Esophagus squamous epithelium (tissue), 5 donors: ENCODE measurements at regions of chr20 and their contacts with region 1.

Region 1: DNA sequence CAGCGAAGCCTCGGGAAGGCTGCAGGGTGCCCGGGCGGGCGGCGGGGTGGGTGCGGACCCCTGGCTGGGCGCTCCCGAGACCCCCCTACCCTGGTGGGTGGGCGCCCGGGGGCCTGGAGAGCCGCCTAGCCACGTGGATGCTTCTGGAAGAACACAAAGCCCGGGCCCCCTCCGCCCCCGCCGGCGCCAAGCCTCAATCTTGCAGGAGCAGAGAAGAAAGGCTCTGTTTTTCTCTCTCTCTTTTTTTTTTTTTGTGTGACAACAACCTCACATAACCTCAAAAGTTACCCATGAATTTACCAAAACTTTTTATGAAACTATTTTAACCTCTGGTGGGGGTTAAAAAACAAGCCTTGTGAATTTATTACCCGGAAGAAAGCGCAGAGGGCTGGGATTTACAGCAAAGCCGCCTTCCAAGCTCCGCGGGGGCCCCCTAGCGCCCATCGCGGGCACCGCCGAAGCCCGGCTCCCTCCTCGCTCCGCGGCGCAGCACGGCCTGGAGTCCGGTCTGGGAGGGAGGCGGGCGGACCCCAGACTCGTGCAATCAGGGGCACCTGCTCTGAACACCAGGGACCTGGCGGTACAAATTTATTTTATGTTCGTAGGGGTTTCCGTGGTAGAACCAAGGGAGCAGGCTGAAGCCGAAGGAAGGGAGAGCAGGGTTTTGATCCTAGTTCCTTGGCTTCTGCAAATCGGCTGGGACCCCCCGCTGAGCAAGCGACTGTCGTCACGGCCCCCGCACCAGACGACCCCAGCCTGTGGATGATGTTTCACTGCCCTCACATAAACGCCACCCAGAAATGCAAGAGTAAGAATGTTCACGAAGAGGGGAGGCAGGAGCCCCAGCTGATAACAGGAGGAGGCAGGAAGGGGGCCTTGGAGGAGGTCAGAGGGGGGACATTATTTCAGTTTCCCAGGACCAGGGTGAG is 58.9 kb downstream of the ZNF831 start:
- DNase-seq: no peak
- H3K4me3 ChIP-seq: peak overlapping the region; percentile 46 to 70 (median 54)
- H3K27ac ChIP-seq: peak overlapping the region; percentile 64 to 81 (median 72)
- H3K4me1 ChIP-seq: peaks cover 5 to 27% (median 12%) of the 10 kb centered on the region in 3 donors
- H3K27me3 ChIP-seq: peaks cover 0 to 29% (median 0%) of the 10 kb centered on the region in 4 donors
- CTCF ChIP-seq: peak; percentile 88 to 94 (median 92)
- POLR2A ChIP-seq: no peak

Region 2: GRCh38 chr20:58870239-58871014 is 352.1 kb before region 1 on chr20:
- intact Hi-C with region 1: loop called (anchors 10 kb)
- DNase-seq: no peak
- H3K4me3 ChIP-seq: no peak overlapping the region
- H3K27ac ChIP-seq: no peak overlapping the region
- H3K4me1 ChIP-seq: peaks cover 0 to 7% (median 0%) of the 10 kb centered on the region in 3 donors
- H3K27me3 ChIP-seq: no peaks in the 10 kb centered on the region
- CTCF ChIP-seq: peak; percentile 81 to 85 (median 84)
- POLR2A ChIP-seq: no peak

Region 3: GRCh38 chr20:59006864-59007664 is 215.5 kb before region 1 on chr20 and contains the start of gene CTSZ:
- intact Hi-C with region 1: no loop called
- DNase-seq: no peak
- H3K4me3 ChIP-seq: peak within 1 kb of the TSS; percentile 52 to 85 (median 66)
- H3K27ac ChIP-seq: peak within 1 kb of the TSS; percentile 77 to 90 (median 86)
- H3K4me1 ChIP-seq: peaks cover 30 to 80% (median 47%) of the 10 kb centered on the region in 3 donors
- H3K27me3 ChIP-seq: no peaks in the 10 kb centered on the region
- CTCF ChIP-seq: no peak
- POLR2A ChIP-seq: peak in 2 of 4 donors; percentile 49 to 57
- total RNA-seq, gene CTSZ: 22.3 to 89.7 (median 57.2) TPM

Region 4: DNA sequence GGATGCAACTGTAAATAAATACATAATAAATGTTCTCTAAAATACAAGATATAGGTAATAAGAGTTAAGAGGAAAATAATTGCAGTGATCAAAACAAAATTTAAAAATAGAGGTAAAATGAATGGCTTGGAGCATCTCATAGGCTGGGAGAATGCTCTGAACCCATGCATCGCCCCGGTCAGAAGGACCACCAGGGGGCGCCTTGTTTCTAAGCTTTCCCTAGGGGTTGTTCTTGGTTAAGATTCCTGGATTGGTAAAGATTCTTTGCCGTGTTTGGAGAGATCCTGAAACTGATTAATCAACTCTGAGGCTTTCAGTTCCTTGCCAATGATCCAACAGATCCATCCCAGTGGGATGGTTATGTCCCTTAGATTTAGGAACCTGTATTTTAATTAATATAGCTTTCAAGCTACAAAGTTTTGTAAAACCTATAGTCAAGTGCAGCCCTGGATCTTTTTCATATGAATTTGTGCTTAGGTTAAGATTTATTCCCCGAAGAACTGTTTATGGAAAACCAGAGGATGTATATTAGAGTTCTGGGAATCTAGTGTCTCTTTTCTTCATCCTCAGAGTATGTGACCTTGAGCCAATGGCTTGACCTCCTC is 134.6 kb before region 1 on chr20:
- intact Hi-C with region 1: loop called (anchors 5 kb)
- DNase-seq: peak; percentile 7
- H3K4me3 ChIP-seq: no peak overlapping the region
- H3K27ac ChIP-seq: no peak overlapping the region
- H3K4me1 ChIP-seq: peaks cover 0 to 15% (median 4%) of the 10 kb centered on the region in 3 donors
- H3K27me3 ChIP-seq: no peaks in the 10 kb centered on the region
- CTCF ChIP-seq: peak; percentile 87 to 96 (median 90)
- POLR2A ChIP-seq: no peak

Region 5: GRCh38 chr20:59385480-59385879 is 163.0 kb after region 1 on chr20:
- intact Hi-C with region 1: no loop called
- DNase-seq: no peak
- H3K4me3 ChIP-seq: no peak overlapping the region
- H3K27ac ChIP-seq: peak overlapping the region in 3 of 4 donors; percentile 72 to 87 (median 75)
- H3K4me1 ChIP-seq: peaks cover 0 to 79% (median 22%) of the 10 kb centered on the region in 3 donors
- H3K27me3 ChIP-seq: peaks cover 0 to 66% (median 0%) of the 10 kb centered on the region in 4 donors
- CTCF ChIP-seq: peak in 2 of 6 experiments; percentile 25 to 27
- POLR2A ChIP-seq: no peak

Region 6: DNA sequence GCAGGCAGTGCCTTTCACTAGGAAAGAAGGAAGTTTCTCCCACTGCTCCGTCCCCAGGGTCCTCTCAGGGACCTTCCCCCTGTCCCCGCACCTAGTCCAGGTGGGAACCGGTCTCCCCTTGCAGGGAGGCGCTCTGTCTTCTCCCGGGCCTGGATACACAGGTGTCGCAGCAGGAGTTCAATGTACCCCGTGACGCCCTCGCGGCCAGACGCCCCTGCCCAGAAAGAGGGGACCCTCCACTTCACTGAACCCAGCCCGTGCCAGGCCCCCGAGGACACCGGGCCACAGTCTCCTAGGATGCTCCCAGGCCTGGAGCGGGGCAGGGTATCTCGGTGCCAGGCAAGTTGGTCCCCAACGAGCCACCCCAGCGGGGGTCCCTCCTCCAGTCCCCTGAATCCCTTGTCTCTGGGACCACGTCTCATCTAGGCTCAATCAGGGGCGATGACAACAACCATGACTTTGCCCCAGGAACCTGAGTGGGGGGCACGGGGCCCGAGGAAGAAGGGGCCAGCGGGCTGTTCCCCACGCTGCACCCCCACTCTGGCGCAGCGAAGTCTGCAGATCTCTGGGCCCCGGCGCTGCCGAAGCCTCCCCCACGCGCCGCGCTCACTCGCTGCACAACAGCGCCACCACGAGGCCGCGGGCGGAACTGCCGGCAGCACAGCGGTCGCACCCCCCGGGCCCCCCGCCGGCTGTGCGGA is 180.9 kb after region 1 on chr20:
- intact Hi-C with region 1: loop called (anchors 10 kb)
- DNase-seq: no peak
- H3K4me3 ChIP-seq: peak overlapping the region in 2 of 4 donors; percentile 18 to 51
- H3K27ac ChIP-seq: peak overlapping the region in 3 of 4 donors; percentile 41 to 63 (median 58)
- H3K4me1 ChIP-seq: peaks cover 13 to 54% (median 14%) of the 10 kb centered on the region in 3 donors
- H3K27me3 ChIP-seq: peaks cover 0 to 83% (median 14%) of the 10 kb centered on the region in 4 donors
- CTCF ChIP-seq: peak; percentile 88 to 99 (median 96)
- POLR2A ChIP-seq: no peak

Region 7: DNA sequence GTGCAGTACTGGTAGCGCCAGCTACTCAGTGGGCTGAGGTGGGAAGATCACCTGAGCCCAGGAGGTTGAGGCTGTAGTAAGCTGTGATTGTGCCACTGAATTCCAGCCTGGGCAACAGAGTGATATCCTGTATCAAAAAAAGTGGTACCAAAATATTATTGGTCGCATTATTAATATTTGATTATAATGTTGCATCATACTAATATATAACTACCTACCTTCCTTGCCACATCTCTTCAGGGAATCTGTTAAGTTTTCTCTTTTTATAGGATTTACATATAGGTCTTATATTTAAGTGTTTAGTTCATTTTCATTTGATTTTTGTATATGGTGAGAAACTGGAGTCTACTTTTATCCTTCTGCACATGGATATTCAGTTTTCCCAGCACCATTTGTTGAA is 315.5 kb after region 1 on chr20:
- intact Hi-C with region 1: no loop called
- DNase-seq: no peak
- H3K4me3 ChIP-seq: no peak overlapping the region
- H3K27ac ChIP-seq: no peak overlapping the region
- H3K4me1 ChIP-seq: no peaks in the 10 kb centered on the region
- H3K27me3 ChIP-seq: peaks cover 0 to 24% (median 0%) of the 10 kb centered on the region in 4 donors
- CTCF ChIP-seq: no peak
- POLR2A ChIP-seq: no peak